WTC11 (cell line): ENCODE measurements at regions of chr19 and their contacts with region 1.

Region 1: GRCh38 chr19:14517840-14518505 is at the start of gene DNAJB1:
- DNase-seq: peak; percentile 58
- ATAC-seq: peak; percentile 77
- H3K4me3 Mint-ChIP-seq: peak within 1 kb of the TSS; percentile 92
- H3K27ac Mint-ChIP-seq: peak within 1 kb of the TSS; percentile 94
- H3K4me1 Mint-ChIP-seq: peaks cover 27% of the 10 kb centered on the region
- H3K27me3 Mint-ChIP-seq: no peaks in the 10 kb centered on the region
- CTCF ChIP-seq: no peak
- total RNA-seq, gene DNAJB1: 54.5 to 88.7 TPM (median 81.9 TPM) in 3 replicates

Region 2: GRCh38 chr19:14550201-14550784 is 32.3 kb after region 1 on chr19:
- CTCF ChIA-PET with region 1: interaction called, 17 read pairs
- POLR2A ChIA-PET with region 1: interaction called, 3 read pairs
- DNase-seq: no peak
- ATAC-seq: no peak
- H3K4me3 Mint-ChIP-seq: no peak overlapping the region
- H3K27ac Mint-ChIP-seq: peak overlapping the region; percentile 67
- H3K4me1 Mint-ChIP-seq: peaks cover 12% of the 10 kb centered on the region
- H3K27me3 Mint-ChIP-seq: no peaks in the 10 kb centered on the region
- CTCF ChIP-seq: no peak